ENCODE measurements at regions of chr6 and their contacts with region 1.

Region 1: GRCh38 chr6:20497216-20498040 is 36.8 kb upstream of the CDKAL1 start:
- DNase-seq: peak; percentile 70
- H3K4me3 ChIP-seq: no peak overlapping the region
- H3K27ac ChIP-seq: peak overlapping the region; percentile 33
- H3K4me1 ChIP-seq: peaks cover 16% of the 10 kb centered on the region
- H3K27me3 ChIP-seq: no peaks in the 10 kb centered on the region
- CTCF ChIP-seq: no peak
- POLR2A ChIP-seq: no peak

Region 2: DNA sequence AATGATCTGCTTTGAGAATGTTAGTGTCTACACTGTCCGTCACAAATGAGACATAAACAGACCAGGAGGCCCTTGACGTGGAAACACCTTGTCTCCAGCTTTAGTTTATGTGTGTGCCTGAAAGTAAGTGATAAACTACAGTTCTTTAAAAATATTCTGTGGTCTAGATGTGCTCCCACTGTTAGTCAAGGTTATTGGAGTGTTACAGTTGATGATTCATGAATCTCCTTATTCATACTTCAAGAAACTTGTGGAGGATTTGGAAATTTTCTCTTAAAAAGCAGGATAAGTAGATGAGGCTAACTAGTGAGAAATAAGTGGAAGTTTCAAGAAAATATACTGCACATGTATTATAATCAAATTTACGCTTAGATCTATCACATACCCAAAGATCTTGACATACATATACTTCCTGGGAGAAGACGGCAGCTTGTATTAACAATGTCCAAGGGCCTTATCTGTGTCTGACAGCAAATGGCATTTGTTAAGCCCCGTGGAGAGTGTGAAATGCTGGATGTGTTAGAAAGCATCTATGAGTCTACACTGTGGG is 194.7 kb before region 1 on chr6:
- CTCF ChIA-PET with region 1: no interaction called
- POLR2A ChIA-PET with region 1: no interaction called
- dilution Hi-C with region 1: no loop called
- intact Hi-C with region 1: no loop called
- DNase-seq: no peak
- H3K4me3 ChIP-seq: no peak overlapping the region
- H3K27ac ChIP-seq: no peak overlapping the region
- H3K4me1 ChIP-seq: no peaks in the 10 kb centered on the region
- H3K27me3 ChIP-seq: no peaks in the 10 kb centered on the region
- CTCF ChIP-seq: no peak
- POLR2A ChIP-seq: no peak

Region 3: DNA sequence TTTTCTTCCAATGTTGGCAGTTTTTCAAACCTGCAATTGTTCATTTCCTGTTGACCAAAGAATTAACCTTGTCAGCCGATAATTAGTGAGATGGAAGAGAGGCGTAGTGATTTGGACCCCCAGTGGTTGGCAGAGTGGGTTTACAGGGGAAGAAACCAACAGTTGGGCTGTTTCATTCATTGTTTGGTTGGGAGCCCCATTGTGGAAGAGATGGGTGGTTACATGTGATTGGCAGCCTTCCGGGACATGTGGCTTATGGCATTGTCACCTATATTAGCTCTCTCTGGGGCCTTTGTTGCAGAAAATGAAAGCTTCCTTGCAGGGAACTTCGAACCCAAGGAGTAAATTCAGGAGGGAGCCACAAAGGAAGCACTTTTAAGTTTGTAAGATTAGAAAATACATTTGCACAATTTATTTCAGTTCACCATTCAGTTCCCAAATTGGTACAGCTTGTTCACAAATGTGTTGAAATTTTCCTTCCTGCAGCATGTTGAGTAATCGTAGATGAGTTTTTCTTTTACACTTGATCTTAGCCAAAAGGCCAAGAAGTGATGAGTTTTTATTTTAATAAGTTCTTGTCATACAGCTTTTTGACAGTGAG is 13.4 kb before region 1 on chr6:
- CTCF ChIA-PET with region 1: no interaction called
- POLR2A ChIA-PET with region 1: no interaction called
- dilution Hi-C with region 1: no loop called
- intact Hi-C with region 1: loop called (anchors 1 kb)
- DNase-seq: no peak
- H3K4me3 ChIP-seq: no peak overlapping the region
- H3K27ac ChIP-seq: no peak overlapping the region
- H3K4me1 ChIP-seq: peaks cover 4% of the 10 kb centered on the region
- H3K27me3 ChIP-seq: no peaks in the 10 kb centered on the region
- CTCF ChIP-seq: no peak
- POLR2A ChIP-seq: no peak